IMR-90 (cell line): ENCODE measurements at regions of chr12 and their contacts with region 1.

Region 1: DNA sequence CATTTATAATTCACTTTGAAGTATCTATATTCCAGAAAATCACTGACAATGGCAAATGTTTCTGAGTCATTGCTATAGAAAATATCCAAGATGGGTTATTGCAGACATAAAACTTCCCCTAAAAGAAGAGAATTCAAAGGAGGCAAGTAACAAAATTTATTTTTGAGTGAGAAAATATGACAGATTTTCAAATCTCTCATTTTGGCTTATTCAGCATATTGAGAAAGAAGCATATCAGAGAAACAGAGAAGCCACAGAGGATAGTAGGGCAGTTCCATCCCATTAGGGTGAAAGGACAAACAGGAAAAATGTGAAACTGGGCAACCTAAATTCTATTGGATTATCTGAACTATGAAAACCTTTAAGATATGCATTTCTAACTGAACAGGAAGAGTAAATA is 85.0 kb downstream of the SYT1 start:
- DNase-seq: no peak
- ATAC-seq: no peak
- H3K4me3 ChIP-seq: no peak overlapping the region
- H3K27ac ChIP-seq: no peak overlapping the region
- H3K4me1 ChIP-seq: no peaks in the 10 kb centered on the region
- H3K27me3 ChIP-seq: no peaks in the 10 kb centered on the region
- CTCF ChIP-seq: no peak
- POLR2A ChIP-seq: no peak
- RAD21 ChIP-seq: no peak

Region 2: GRCh38 chr12:78963439-78964222 is 14.1 kb after region 1 on chr12:
- CTCF ChIA-PET with region 1: no interaction called
- POLR2A ChIA-PET with region 1: no interaction called
- dilution Hi-C with region 1: no loop called
- in situ Hi-C with region 1: no loop called
- intact Hi-C with region 1: loop called (anchors 1 kb)
- DNase-seq: peak; percentile 61
- ATAC-seq: peak; percentile 79
- H3K4me3 ChIP-seq: no peak overlapping the region
- H3K27ac ChIP-seq: no peak overlapping the region
- H3K4me1 ChIP-seq: no peaks in the 10 kb centered on the region
- H3K27me3 ChIP-seq: no peaks in the 10 kb centered on the region
- CTCF ChIP-seq: no peak
- POLR2A ChIP-seq: no peak
- RAD21 ChIP-seq: no peak